ENCODE measurements at regions of chr16 and their contacts with region 1.

Region 1: GRCh38 chr16:684067-684794 is at the start of gene JMJD8:
- DNase-seq: peak; percentile 90 to 97
- ATAC-seq: peak; percentile 61 to 77
- H3K4me3 ChIP-seq: peak within 1 kb of the TSS; percentile 76
- H3K27ac ChIP-seq: peak within 1 kb of the TSS; percentile 91 to 93
- H3K4me1 ChIP-seq: peaks cover 34% of the 10 kb centered on the region
- CTCF ChIP-seq: no peak
- EP300 ChIP-seq: no peak
- POLR2A ChIP-seq: peak; percentile 88
- RAD21 ChIP-seq: no peak
- polyA plus RNA-seq, gene JMJD8: 37.5 and 43.8 TPM in 2 replicates

Region 2: GRCh38 chr16:695355-696089 is 11.3 kb after region 1 on chr16:
- CTCF ChIA-PET with region 1: interaction called, 10 read pairs
- POLR2A ChIA-PET with region 1: interaction called, 12 read pairs
- DNase-seq: peak in 1 of 2 experiments; percentile 78
- ATAC-seq: peak; percentile 38 to 61
- H3K4me3 ChIP-seq: peak overlapping the region; percentile 37
- H3K27ac ChIP-seq: peak overlapping the region; percentile 51 to 76; a peak in 5 of 6 replicates
- H3K4me1 ChIP-seq: peaks cover 22% of the 10 kb centered on the region; the same call in 2 of the 3 replicates
- CTCF ChIP-seq: no peak
- EP300 ChIP-seq: no peak
- POLR2A ChIP-seq: peak; percentile 42; the same call in 1 of the 2 replicates
- RAD21 ChIP-seq: no peak

Region 3: DNA sequence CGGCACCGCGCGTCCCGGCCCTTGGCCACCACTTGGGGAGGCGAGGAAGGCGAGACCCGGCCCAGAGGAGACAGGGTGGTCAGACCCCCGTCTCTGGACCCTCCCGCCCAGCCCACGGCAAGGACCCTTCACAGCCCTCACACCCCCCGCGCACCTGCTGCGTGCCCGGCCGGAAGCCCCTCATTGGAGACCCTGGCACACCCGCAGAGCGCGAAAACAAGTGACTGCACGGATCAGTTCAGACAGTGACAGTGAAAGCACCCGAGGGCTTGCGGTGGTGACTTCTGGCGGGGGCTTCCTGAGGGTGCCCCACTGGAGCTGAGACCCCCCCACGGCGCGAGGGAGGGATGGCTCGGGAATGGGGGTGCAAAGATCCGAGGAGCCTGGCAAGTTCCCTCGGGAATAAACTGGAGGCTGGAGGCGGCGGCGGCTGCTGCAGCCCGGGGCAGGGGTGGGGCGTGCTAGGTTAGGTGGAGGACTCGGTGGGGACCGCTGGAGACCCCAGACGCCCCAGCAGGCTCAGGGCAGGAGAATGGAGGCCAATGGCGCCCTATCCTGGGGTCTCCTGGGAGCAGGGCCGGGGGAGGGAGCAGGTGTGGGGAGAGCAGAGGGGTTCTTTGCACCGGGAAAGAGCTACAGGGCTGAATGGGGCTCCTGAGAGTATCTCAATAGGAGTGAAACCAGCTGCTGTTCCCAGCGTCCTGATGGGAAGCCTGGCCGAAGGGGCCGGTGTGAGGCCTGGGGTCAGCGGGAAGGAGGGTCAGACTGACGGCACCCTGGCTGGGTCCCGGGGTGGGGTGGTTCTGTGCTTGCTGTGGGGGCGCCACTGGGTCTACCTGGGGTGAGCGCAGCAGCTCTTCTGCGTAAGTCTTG is 22.2 kb after region 1 on chr16:
- CTCF ChIA-PET with region 1: interaction called, 11 read pairs
- POLR2A ChIA-PET with region 1: no interaction called
- DNase-seq: no peak
- ATAC-seq: peak; percentile 9 to 41; a peak in 3 of 6 replicates
- H3K4me3 ChIP-seq: peak overlapping the region; percentile 59
- H3K27ac ChIP-seq: peak overlapping the region; percentile 73 to 75; a peak in 5 of 6 replicates
- H3K4me1 ChIP-seq: peaks cover 42% of the 10 kb centered on the region
- CTCF ChIP-seq: no peak
- EP300 ChIP-seq: no peak
- POLR2A ChIP-seq: no peak
- RAD21 ChIP-seq: no peak

Region 4: DNA sequence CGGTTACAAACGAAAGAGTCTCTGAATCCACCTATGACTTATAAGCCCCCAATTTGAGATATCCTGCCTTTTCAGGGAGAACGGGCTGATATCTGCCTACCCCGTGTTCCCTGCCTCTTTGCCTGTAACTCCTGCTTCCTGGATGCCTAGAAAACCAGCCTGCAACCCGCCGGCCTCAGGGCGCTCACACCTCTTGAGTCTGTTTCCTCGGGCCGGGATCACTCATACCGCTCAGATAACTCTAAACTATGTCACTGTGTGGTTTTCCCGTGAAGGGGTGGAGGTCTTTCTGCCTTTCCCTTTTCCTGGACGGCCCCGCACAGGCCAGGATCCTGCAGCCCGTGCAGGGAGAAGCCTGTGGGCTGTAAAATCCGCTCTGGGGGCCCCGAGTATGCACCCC is 93.6 kb after region 1 on chr16:
- CTCF ChIA-PET with region 1: no interaction called
- POLR2A ChIA-PET with region 1: no interaction called
- DNase-seq: no peak
- ATAC-seq: peak; percentile 2 to 3; a peak in 3 of 6 replicates
- H3K4me3 ChIP-seq: no peak overlapping the region
- H3K27ac ChIP-seq: no peak overlapping the region
- H3K4me1 ChIP-seq: 0 out of 3 replicates have a peak, but pooled peaks cover 3% of the 10 kb centered on the region
- CTCF ChIP-seq: no peak
- EP300 ChIP-seq: no peak
- POLR2A ChIP-seq: no peak
- RAD21 ChIP-seq: no peak